ENCODE measurements at regions of chr4 and their contacts with region 1.

Region 1: DNA sequence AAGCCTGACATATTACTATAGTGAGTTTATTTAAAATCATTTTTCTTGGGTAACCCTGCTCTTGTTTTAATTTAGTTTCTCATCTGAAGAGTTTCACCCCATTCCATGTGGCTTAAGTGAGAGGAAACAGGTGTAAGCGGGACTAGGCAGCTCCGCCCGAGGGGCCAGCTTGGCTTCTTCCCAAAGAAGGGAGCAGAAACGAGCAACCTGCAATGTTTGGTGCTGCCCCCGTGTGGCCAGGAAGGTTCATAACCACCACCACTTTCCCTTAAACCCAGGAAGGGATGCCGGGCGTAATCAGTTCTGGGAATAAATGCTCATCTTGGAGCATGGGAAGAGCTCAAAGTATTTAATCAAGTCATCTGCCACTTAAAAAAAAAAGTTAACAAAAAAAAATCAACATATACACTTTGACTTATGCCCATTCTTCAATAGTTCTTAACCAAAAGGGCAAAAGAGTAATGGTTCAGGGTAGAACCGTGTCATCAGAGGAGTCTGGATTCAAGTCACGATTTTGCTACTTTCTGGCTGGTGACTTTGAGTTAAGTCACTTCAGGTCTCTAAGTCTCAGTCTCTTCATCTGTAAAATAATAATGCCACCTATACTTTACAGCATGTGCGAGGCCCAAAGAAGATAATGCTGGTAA is 147.9 kb downstream of the NSUN7 start:
- DNase-seq: peak in 1 of 2 donors; percentile 41
- ATAC-seq: peak; percentile 37 to 55
- H3K4me3 ChIP-seq: no peak overlapping the region
- H3K27ac ChIP-seq: no peak overlapping the region
- H3K4me1 ChIP-seq: peaks cover 6 to 11% of the 10 kb centered on the region in 2 donors
- H3K27me3 ChIP-seq: no peaks in the 10 kb centered on the region
- CTCF ChIP-seq: peak; percentile 61 to 79 (median 67)
- POLR2A ChIP-seq: no peak

Region 2: DNA sequence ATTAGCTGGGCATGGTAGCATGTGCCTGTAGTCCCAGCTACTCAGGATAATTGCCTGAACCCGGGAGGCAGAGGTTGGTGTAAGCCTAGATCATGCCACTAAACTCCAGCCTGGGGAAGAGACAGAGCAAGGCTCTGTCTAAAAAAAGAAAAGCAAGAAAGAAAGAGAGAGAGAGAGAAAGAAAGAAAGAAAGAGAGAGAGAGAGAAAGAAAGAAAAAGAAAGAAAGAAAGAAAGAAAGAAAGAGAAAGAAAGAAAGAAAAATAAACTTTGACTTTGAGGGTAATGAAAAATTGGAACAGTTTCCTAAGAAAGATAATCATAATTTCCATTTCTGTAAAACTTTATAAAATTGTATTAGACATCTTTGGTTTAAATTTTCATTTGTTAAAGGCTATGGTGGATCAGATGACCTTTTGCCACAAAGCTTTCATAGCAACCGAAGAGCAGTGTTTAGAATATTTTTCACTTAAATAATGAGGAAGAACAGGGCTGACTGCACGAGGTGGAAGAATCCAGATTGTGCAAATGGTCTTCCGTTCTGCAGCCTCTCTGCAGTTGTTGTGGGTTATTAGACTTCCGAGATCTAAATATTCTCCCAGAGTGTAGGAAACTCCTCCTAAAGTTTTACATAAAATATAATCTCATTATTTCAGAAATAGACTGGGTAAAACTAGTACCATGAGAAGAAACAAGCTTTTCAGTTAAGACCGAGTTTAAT is 323.9 kb before region 1 on chr4:
- in situ Hi-C with region 1: no loop called
- intact Hi-C with region 1: no loop called
- DNase-seq: no peak
- ATAC-seq: no peak
- H3K4me3 ChIP-seq: no peak overlapping the region
- H3K27ac ChIP-seq: no peak overlapping the region
- H3K4me1 ChIP-seq: no peaks in the 10 kb centered on the region
- H3K27me3 ChIP-seq: no peaks in the 10 kb centered on the region
- CTCF ChIP-seq: no peak
- POLR2A ChIP-seq: no peak

Region 3: DNA sequence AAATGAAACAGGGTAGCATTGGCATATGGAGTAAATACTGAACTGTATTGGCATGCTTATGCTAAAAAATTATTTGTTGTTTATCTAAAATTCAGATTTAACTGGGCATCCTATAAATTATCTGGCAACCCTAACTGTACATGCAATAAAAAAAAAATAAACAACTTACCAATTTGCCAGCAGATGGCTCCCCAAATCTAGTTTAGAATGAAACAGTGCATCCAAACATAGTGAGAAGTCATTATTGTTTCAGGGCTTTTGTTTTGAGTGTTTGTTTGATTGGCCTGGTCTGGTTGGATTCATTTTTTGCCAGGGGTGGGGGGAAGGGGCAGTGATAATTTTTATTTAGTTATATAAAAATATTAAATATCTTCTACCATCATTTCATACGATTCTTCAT is 160.8 kb before region 1 on chr4:
- in situ Hi-C with region 1: no loop called
- intact Hi-C with region 1: loop called (anchors 10 kb)
- DNase-seq: no peak
- ATAC-seq: no peak
- H3K4me3 ChIP-seq: no peak overlapping the region
- H3K27ac ChIP-seq: no peak overlapping the region
- H3K4me1 ChIP-seq: peaks cover 2% of the 10 kb centered on the region in 2 donors
- H3K27me3 ChIP-seq: no peaks in the 10 kb centered on the region
- CTCF ChIP-seq: peak in 1 of 5 experiments; percentile 26
- POLR2A ChIP-seq: no peak

Region 4: DNA sequence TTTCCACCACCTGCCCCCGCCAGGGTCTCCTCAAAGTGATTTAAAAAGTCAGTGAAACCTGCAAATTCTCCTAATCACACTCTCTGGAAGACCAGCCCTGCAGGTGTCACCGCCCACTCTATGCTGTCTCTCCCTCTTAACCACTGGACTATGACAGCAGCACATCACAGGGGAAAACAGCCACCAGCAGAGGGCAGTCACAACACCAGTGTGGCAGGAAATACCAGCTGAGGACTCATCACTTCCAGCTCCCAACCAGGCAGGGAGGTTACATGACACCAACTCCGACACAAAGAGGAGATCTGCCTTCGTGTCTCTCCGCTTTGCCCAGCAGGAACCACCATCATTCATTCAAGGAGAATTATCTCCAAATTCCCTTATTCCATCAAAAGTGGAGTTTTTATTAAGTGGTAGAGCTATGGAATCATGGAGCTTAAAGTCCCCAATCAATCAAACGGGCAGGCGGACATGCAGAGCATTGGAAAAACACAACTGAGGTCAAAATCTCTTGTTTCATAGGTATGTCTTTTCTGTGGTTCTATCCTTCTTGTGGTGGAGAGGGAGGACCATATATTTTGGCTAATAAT is 56.6 kb before region 1 on chr4:
- in situ Hi-C with region 1: no loop called
- intact Hi-C with region 1: loop called (anchors 1 kb)
- DNase-seq: peak; percentile 31 to 77
- ATAC-seq: peak; percentile 54 to 81
- H3K4me3 ChIP-seq: no peak overlapping the region
- H3K27ac ChIP-seq: peak overlapping the region; percentile 29 to 76 (median 72)
- H3K4me1 ChIP-seq: peaks cover 31 to 72% of the 10 kb centered on the region in 2 donors
- H3K27me3 ChIP-seq: no peaks in the 10 kb centered on the region
- CTCF ChIP-seq: peak; percentile 12 to 74 (median 64)
- POLR2A ChIP-seq: no peak

Region 5: DNA sequence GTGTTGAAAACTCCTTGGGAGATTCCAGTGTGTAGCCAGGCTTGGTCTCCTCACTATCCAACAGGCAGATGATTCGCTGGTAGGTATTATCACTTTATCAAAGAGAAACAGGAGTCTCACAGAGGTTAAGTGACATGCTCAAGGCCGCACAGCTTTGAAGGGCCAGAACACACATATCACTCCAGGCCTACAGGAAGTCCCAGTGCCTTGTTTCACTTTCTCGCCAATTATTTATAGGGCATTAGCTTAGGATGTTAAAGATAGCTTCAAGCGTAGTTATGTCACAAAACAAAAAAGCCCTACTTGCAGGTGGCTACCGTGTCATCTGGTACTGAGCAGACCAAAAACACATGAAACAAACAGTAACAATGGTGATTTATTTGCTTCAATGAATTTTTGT is 1746.0 kb after region 1 on chr4:
- in situ Hi-C with region 1: no loop called
- intact Hi-C with region 1: loop called (anchors 10 kb)
- DNase-seq: peak in 1 of 2 donors; percentile 49
- ATAC-seq: peak; percentile 61 to 84
- H3K4me3 ChIP-seq: peak overlapping the region in 3 of 4 donors; percentile 17 to 20 (median 19)
- H3K27ac ChIP-seq: peak overlapping the region; percentile 83 to 94 (median 86)
- H3K4me1 ChIP-seq: peaks cover 84 to 95% of the 10 kb centered on the region in 2 donors
- H3K27me3 ChIP-seq: no peaks in the 10 kb centered on the region
- CTCF ChIP-seq: no peak
- POLR2A ChIP-seq: no peak